A549 (cell line): ENCODE measurements at regions of chr9 and their contacts with region 1.

Region 1: GRCh38 chr9:36728651-36729520 is 156.2 kb downstream of the MELK start:
- DNase-seq: peak; percentile 54 to 76
- ATAC-seq: peak; percentile 87 to 97
- H3K4me3 ChIP-seq: no peak overlapping the region
- H3K27ac ChIP-seq: no peak overlapping the region
- H3K4me1 ChIP-seq: no peaks in the 10 kb centered on the region
- CTCF ChIP-seq: peak; percentile 82
- EP300 ChIP-seq: no peak
- POLR2A ChIP-seq: no peak
- RAD21 ChIP-seq: peak; percentile 86 to 90

Region 2: GRCh38 chr9:36632892-36633291 is 96.0 kb before region 1 on chr9:
- CTCF ChIA-PET with region 1: interaction called, 48 read pairs
- POLR2A ChIA-PET with region 1: interaction called, 3 read pairs
- DNase-seq: peak; percentile 25 to 36
- ATAC-seq: peak in 1 of 2 experiments; percentile 70; a peak in 3 of 6 replicates
- H3K4me3 ChIP-seq: no peak overlapping the region
- H3K27ac ChIP-seq: no peak overlapping the region
- H3K4me1 ChIP-seq: no peaks in the 10 kb centered on the region
- CTCF ChIP-seq: peak; percentile 67
- EP300 ChIP-seq: no peak
- POLR2A ChIP-seq: no peak
- RAD21 ChIP-seq: peak; percentile 39 to 57

Region 3: GRCh38 chr9:36748322-36748899 is 19.5 kb after region 1 on chr9:
- CTCF ChIA-PET with region 1: interaction called, 27 read pairs
- POLR2A ChIA-PET with region 1: no interaction called
- DNase-seq: peak; percentile 35 to 41
- ATAC-seq: peak; percentile 68 to 83
- H3K4me3 ChIP-seq: no peak overlapping the region
- H3K27ac ChIP-seq: no peak overlapping the region
- H3K4me1 ChIP-seq: no peaks in the 10 kb centered on the region
- CTCF ChIP-seq: no peak
- EP300 ChIP-seq: no peak
- POLR2A ChIP-seq: no peak
- RAD21 ChIP-seq: no peak